Activated CD8-positive, alpha-beta T cell treated with anti-CD3 and anti-CD28 coated beads, Interleukin-2, amount 10 ng/mL, durations not matched to agents 7 days and 5 days (primary cell): ENCODE measurements at regions of chr6 and their contacts with region 1.

Region 1: DNA sequence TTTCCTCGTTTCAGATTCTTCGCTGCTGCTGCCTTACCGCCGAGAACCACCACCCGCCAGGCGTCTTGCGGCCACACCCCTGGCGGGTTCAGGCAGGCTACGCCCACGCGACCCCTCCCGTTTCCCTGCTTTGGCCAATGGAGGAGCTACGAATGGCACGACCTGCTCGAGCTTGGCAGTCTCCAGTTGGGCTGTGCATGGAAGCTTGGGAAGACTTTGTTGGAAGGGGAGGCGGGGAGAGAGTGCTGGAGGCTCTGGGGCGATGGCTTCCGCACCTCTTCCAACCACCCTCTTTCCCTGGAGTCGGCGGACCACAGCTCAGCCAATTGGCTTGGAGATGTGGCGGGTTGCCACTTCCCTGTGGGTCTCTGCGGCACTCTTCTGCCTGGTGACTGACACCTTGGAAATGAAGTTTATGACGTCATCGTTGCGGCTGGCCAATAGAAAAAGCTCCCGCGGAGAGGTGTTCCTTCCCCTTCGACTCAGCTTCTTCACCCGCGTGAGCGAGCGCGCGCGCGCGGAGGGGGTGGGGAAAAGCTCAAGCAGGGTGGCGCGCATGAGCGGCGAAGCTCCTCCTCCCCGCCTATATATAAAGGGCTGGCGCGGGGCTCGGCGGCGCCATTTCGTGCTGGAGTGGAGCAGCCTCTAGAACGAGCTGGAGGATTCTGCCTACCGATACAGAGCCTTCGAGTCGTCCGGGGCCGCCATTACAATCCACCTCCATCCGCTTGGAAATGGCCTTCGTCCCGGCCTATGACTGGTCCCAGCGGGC is 3.4 kb downstream of the BRD2 start:
- DNase-seq: peak; percentile 100
- ATAC-seq: peak; percentile 50
- H3K4me3 Mint-ChIP-seq: peak overlapping the region; percentile 96
- H3K27ac Mint-ChIP-seq: peak overlapping the region; percentile 98
- H3K4me1 Mint-ChIP-seq: peaks cover 24% of the 10 kb centered on the region
- H3K27me3 Mint-ChIP-seq: no peaks in the 10 kb centered on the region

Region 2: DNA sequence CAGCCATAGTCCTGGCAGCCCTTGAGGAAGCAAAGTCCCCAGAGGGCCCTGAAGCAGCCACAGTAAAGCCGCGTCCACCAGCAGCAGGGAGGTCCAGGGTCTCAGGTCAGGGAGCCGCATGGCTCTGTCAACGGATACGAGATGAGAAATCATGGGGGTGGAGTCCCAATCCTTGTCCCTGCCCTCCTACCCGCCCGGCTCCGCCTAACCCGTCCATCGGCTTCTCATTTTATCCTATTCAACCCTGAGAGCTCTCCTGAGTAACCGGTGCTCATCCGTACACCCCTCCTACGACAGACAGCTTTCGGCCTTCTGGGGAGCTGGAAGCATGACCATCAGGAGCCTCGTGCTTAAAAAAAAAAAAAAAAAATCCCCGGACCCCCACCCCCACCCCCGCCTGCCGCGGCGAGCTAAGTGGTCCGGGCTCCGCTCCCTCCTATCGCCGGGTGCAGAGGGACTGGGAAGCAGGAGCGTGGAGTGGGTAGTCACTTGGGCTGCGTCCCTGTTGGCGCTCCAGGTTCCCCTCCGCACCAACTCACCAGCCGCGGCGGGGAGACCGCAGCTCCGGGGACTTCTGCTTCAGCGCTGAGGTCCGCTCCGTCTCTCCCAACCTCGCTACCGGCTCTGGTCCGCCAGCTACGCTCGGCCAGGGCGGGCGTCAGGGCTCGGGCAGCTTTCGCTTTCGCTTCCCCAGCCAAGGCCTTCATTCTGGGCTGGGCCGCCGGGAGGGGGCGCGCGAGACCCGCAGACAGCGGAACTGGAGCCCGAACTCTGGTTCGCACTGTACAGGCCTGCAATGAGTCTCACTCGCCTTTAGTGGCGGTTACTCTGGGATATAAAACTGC is 133.4 kb before region 1 on chr6 and contains the start of gene TAP2:
- CTCF ChIA-PET with region 1: interaction called, 36 read pairs
- POLR2A ChIA-PET with region 1: interaction called, 381 read pairs
- DNase-seq: peak; percentile 98
- ATAC-seq: peak; percentile 85
- H3K4me3 Mint-ChIP-seq: peak within 1 kb of the TSS; percentile 82
- H3K27ac Mint-ChIP-seq: peak within 1 kb of the TSS; percentile 99
- H3K4me1 Mint-ChIP-seq: peaks cover 80% of the 10 kb centered on the region
- H3K27me3 Mint-ChIP-seq: no peaks in the 10 kb centered on the region
- total RNA-seq, gene TAP2: 145 to 159 TPM

Region 3: GRCh38 chr6:32868257-32868788 is 103.4 kb before region 1 on chr6:
- CTCF ChIA-PET with region 1: interaction called, 17 read pairs
- POLR2A ChIA-PET with region 1: interaction called, 42 read pairs
- DNase-seq: peak; percentile 93
- ATAC-seq: peak; percentile 77
- H3K4me3 Mint-ChIP-seq: no peak overlapping the region
- H3K27ac Mint-ChIP-seq: no peak overlapping the region
- H3K4me1 Mint-ChIP-seq: peaks cover 35% of the 10 kb centered on the region
- H3K27me3 Mint-ChIP-seq: peaks cover 3% of the 10 kb centered on the region

Region 4: GRCh38 chr6:32933636-32934085 is 38.1 kb before region 1 on chr6:
- CTCF ChIA-PET with region 1: interaction called, 73 read pairs
- POLR2A ChIA-PET with region 1: interaction called, 220 read pairs
- DNase-seq: peak; percentile 80
- ATAC-seq: peak; percentile 68
- H3K4me3 Mint-ChIP-seq: no peak overlapping the region
- H3K27ac Mint-ChIP-seq: no peak overlapping the region
- H3K4me1 Mint-ChIP-seq: peaks cover 16% of the 10 kb centered on the region
- H3K27me3 Mint-ChIP-seq: peaks cover 12% of the 10 kb centered on the region

Region 5: DNA sequence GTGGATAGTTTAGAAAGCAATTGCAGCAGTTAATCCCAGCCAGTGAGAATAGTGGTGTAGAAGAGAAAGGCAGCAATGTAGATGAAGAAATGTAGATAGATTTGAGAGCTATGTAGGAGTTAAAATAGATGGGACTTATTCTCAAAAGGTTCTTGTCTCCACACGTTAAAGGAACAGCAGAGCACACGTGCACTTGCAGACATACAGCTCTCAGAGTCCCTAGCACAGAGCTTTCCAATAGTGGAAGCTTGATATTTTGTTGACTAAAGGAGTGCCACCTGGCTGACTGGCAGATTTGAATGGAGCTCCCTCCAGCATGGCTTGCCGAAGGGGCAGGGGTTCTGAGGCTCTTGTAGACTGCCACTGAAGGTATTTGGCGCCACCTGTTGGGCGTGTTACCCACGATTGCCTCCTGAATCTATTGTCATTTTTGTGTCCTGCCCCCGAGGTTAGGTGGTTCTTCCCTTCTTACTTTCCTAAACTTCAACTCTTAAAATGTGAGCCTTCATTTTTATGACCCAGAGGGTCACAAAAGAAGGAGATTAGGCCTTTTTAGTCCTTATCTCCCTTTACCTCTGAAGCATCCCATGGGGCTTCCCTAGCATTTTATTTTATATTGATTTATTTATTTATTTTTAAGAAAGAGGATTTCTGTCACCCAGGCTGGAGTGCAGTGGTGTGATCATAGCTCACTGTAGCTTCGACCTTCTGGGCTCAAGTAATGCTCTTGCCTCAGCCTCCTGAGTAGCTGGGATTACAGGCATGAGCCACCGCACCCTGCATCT is 13.0 kb after region 1 on chr6:
- CTCF ChIA-PET with region 1: interaction called, 123 read pairs
- POLR2A ChIA-PET with region 1: interaction called, 263 read pairs
- DNase-seq: peak; percentile 93
- ATAC-seq: peak; percentile 78
- H3K4me3 Mint-ChIP-seq: no peak overlapping the region
- H3K27ac Mint-ChIP-seq: peak overlapping the region; percentile 58
- H3K4me1 Mint-ChIP-seq: peaks cover 25% of the 10 kb centered on the region
- H3K27me3 Mint-ChIP-seq: peaks cover 3% of the 10 kb centered on the region

Region 6: GRCh38 chr6:33014841-33015634 is 43.3 kb after region 1 on chr6:
- CTCF ChIA-PET with region 1: interaction called, 5 read pairs
- POLR2A ChIA-PET with region 1: interaction called, 21 read pairs
- DNase-seq: peak; percentile 78
- ATAC-seq: peak; percentile 57
- H3K4me3 Mint-ChIP-seq: no peak overlapping the region
- H3K27ac Mint-ChIP-seq: no peak overlapping the region
- H3K4me1 Mint-ChIP-seq: peaks cover 28% of the 10 kb centered on the region
- H3K27me3 Mint-ChIP-seq: peaks cover 6% of the 10 kb centered on the region

Region 7: DNA sequence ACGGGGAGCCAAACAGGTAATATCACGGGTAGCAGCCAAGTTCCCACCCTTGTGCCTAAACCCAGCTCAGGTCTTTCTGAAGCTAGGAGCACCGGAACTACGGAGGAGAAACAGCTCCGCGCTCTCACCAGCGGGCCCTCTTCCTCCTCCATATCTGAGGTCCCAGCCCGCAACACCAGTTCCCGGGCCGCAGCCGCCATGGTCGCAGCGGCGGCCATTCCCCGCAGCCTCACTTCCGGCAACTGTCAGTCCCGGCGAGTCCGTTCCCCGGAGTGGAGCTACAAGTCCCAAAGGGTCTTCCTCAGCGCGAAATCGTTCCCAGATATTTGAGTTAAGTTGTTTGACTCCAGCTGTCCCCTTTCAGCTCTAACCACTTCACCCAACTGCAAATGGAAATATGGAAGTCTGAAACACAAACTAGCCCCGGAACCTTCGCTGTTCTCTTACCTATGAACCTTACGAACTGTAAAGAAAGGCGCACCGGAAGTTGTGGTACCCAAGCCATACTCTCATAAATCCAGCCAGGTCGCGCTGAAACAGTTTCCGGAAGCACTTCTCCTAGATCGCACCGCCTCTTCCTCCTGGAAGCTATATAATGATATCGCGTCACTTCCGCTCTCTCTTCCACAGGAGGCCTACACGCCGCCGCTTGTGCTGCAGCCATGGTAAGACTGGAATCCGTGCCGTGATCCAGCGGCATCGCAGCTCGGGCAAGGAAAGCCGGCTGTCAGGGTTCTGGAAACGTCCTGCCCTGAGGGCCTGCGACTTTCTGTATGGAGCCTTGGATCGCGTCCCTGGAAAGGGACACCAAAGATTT is 299.9 kb after region 1 on chr6 and contains the starts of genes RPS18 and VPS52:
- CTCF ChIA-PET with region 1: interaction called, 3 read pairs
- POLR2A ChIA-PET with region 1: interaction called, 11 read pairs
- DNase-seq: peak; percentile 96
- ATAC-seq: peak; percentile 84
- H3K4me3 Mint-ChIP-seq: peak within 1 kb of the TSS; percentile 99
- H3K27ac Mint-ChIP-seq: peak within 1 kb of the TSS; percentile 100
- H3K4me1 Mint-ChIP-seq: peaks cover 52% of the 10 kb centered on the region
- H3K27me3 Mint-ChIP-seq: no peaks in the 10 kb centered on the region
- total RNA-seq, gene RPS18: 2,792 to 2,813 TPM
- total RNA-seq, gene VPS52: 59.3 to 59.5 TPM